ENCODE measurements at regions of chr3 and their contacts with region 1.

Region 1: GRCh38 chr3:46895204-46895660 is 17.7 kb downstream of the PTH1R start:
- DNase-seq: peak; percentile 80 to 83 (median 81)
- H3K4me3 ChIP-seq: no peak overlapping the region
- H3K27ac ChIP-seq: no peak overlapping the region
- H3K4me1 ChIP-seq: peaks cover 0 to 28% (median 18%) of the 10 kb centered on the region in 4 experiments
- H3K27me3 ChIP-seq: peaks cover 0 to 19% (median 6%) of the 10 kb centered on the region in 5 experiments

Region 2: GRCh38 chr3:46845791-46846623 is 49.2 kb before region 1 on chr3:
- CTCF ChIA-PET with region 1: interaction called, 12 read pairs
- POLR2A ChIA-PET with region 1: no interaction called
- DNase-seq: peak; percentile 87 to 94 (median 92)
- H3K4me3 ChIP-seq: peak overlapping the region; percentile 33 to 86 (median 69)
- H3K27ac ChIP-seq: no peak overlapping the region
- H3K4me1 ChIP-seq: peaks cover 0 to 18% (median 16%) of the 10 kb centered on the region in 4 experiments
- H3K27me3 ChIP-seq: peaks cover 0 to 2% (median 0%) of the 10 kb centered on the region in 5 experiments

Region 3: DNA sequence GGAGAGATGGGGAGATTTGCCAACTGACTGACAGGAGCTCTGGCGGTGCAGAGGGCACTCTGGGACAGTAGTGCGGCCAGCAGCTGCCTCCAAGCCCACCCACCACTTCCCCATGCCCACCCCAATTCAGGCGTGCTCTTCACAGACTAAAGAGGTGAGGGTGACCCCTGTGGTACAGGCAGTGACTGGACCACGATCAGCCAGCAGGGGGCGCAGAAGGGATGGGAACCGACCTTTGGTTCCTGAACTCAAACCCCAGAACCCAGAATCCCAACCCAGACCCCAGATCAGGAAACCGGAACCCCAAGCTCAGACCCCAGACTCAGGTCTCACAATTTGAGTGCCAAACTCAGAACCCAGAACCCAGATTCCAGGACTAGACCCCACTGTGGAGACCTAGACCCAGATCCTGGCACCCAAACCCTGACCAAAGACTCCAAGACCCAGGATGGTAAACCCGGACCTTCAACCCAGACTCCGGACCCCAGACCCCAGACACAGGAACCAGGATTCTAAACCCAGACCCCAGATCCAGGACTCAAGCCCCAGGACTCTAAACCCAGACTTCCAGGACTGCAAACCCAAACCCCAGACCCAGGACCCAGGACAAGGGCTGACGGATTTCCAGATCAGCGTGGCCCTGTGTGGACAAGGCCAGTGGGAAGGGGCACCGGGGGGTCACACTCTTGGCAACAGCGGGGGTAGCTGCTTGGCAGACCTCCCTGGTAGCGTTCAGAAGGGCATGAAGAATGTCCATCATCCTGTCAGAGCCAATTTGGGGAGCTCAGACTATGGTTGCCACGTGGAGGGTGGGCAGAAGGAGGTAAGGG is 28.3 kb before region 1 on chr3:
- CTCF ChIA-PET with region 1: interaction called, 68 read pairs
- POLR2A ChIA-PET with region 1: no interaction called
- DNase-seq: peak in 2 of 3 donors; percentile 55 to 67
- H3K4me3 ChIP-seq: no peak overlapping the region
- H3K27ac ChIP-seq: no peak overlapping the region
- H3K4me1 ChIP-seq: peaks cover 0 to under 1% (median 0%) of the 10 kb centered on the region in 4 experiments
- H3K27me3 ChIP-seq: no peaks in the 10 kb centered on the region

Region 4: DNA sequence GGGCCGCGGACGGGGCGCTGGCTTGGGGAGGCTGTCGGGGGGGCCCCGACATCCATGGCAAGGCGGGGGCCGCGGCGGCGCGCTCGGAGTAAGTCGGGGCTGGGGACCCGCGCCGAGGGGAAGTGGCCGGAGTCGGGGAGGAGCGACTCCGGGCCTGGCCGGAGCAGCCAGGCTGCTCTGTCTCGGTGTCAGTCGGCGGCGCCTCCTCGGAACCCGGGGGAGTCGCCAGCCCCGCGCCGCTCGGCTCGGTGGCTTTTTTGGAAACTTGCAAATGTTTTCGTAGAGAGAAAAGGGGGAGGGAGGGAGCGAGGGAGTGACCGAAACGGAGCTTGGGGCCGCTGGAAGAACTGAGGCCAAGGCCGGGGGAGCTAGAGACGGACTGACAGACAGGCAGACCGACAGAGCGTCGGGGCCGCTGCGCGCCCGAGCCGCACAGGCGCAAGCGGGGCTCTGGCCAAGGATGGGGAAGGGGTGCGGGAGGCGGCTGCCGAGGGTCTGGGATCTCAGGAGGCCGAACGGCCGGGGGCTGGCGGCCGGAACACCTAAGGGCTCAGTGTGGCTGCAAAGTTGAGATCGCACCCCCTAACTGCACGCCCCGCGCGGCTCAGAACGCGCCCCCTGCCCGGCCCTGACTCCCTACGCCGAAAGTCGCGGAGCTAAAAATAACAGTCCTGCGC is 12.7 kb before region 1 on chr3:
- CTCF ChIA-PET with region 1: interaction called, 29 read pairs
- POLR2A ChIA-PET with region 1: no interaction called
- DNase-seq: peak in 2 of 3 donors; percentile 25 to 36
- H3K4me3 ChIP-seq: peak overlapping the region; percentile 23 to 66 (median 47)
- H3K27ac ChIP-seq: no peak overlapping the region
- H3K4me1 ChIP-seq: peaks cover 0 to 20% (median 15%) of the 10 kb centered on the region in 4 experiments
- H3K27me3 ChIP-seq: peaks cover 0 to 48% (median 16%) of the 10 kb centered on the region in 5 experiments

Region 5: GRCh38 chr3:47057212-47057671 is 162.0 kb after region 1 on chr3:
- CTCF ChIA-PET with region 1: no interaction called
- POLR2A ChIA-PET with region 1: no interaction called
- DNase-seq: peak in 1 of 3 donors; percentile 8
- H3K4me3 ChIP-seq: no peak overlapping the region
- H3K27ac ChIP-seq: no peak overlapping the region
- H3K4me1 ChIP-seq: no peaks in the 10 kb centered on the region
- H3K27me3 ChIP-seq: no peaks in the 10 kb centered on the region

Measured in common myeloid progenitor, CD34-positive (primary cell).